G401 (cell line): ENCODE measurements at regions of chr6 and their contacts with region 1.

Region 1: GRCh38 chr6:158752613-158753012 is 66.6 kb downstream of the EZR start:
- DNase-seq: peak; percentile 87

Region 2: DNA sequence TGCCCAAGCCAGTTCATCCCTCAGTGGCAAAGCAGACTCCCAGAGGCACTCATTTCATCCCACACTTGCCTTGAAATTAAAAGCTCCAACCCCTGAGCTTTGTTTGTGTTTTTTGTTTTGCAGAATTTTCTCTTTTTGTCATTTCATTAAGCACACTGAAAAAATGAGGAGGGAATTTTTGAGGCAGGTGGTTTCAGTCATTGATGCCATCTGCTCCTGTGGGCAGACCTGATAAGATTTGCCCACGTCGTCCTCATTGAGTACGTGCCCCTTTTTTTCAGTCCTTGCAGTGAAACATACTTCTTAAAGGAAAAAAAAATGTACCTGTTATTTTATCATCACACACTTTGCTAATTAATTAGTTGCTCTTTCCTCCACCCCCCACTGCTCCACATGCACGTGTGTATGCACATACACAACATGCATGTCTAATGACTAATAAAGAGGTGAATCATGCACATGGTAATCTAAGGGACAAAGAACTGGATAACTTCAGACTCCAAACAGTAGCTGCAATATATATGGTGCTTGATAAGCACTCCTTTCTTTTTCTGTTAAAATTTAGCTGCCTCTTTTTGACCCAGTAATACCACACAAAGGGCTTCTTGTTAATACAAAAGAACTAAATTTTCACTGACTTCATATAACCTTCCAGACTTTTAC is 294.9 kb before region 1 on chr6:
- in situ Hi-C with region 1: no loop called
- DNase-seq: peak; percentile 61

Region 3: DNA sequence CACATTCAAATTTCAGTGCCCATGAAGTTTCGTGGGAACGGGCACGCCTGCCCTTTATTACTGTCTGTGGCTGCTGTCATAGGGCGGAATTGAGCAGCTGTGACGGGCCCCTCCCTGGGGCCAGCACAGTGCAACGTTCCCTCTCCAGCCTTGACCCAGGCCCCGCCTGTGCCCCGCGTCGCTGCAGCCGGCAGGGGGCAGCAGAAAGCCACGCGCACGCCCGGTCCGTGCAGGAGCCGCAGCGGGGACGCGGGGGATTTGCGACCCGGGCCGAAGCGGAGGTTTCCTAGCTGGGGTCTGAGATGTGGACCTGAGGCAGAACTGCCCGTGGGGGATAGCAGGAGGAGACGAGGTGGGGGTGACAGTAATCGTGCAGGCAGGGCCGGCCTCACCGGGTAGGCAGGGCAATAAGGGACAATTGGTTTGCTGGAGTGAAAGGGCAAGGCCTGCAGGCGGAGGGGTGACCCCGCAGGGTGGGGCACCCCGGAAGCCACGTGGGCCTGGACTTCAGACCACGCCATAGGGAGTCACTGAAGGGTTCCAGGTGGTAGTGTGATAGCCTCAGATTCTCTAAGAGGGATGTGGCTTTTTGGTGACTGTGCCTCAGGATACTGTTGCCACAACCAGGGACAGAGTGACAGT is 48.3 kb before region 1 on chr6:
- in situ Hi-C with region 1: loop called (anchors 10 kb)
- DNase-seq: peak; percentile 43

Region 4: DNA sequence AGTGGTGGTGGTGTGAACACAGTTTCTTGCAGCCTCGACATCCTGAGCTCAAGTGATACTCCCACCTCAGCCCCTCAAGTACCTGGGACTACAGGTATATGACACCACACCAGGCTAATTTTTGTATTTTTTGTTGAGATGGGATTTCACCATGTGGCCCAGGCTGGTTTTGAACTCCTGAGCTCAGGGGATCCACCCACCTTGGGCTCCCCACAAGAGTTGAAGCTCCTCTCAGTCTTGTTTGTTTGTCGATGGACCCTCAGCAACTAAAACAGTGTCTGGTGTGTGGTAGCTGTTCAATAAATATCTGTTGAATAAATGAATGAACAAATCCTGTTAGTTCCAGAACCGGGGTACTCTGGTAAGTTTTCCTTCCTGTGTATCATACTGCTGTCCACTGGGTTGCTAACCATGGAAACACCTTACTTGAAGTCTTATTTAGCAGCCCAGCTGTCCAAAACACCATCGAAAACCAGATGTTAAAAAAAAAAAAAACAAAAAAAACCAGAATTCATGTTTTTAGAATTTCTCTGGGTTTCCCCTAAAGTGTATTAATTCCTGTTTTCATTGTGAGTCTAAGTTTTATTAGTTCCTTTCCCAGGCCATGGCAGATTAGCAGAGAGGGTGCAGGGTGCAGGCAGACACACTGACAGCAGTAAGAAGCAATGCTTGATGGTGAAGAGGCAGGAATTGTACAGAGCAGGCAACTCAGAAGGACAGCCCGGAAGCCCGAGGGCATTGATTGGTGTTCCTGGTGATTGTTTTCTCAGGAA is 74.4 kb after region 1 on chr6:
- in situ Hi-C with region 1: no loop called
- DNase-seq: no peak

Region 5: GRCh38 chr6:158972241-158973233 is 219.9 kb after region 1 on chr6:
- in situ Hi-C with region 1: loop called (anchors 25 kb)
- DNase-seq: peak; percentile 66